ENCODE measurements at regions of chr6 and their contacts with region 1.

Region 1: GRCh38 chr6:155174576-155175211 is 89.1 kb upstream of the CLDN20 start:
- DNase-seq: no peak
- ATAC-seq: peak; percentile 73
- H3K4me3 Mint-ChIP-seq: no peak overlapping the region
- H3K27ac Mint-ChIP-seq: peak overlapping the region; percentile 48
- H3K4me1 Mint-ChIP-seq: peaks cover 47% of the 10 kb centered on the region
- H3K27me3 Mint-ChIP-seq: no peaks in the 10 kb centered on the region
- CTCF ChIP-seq: no peak

Region 2: GRCh38 chr6:154675602-154676088 is 499.0 kb before region 1 on chr6:
- CTCF ChIA-PET with region 1: interaction called, 12 read pairs
- POLR2A ChIA-PET with region 1: no interaction called
- intact Hi-C with region 1: loop called (anchors 1 kb)
- DNase-seq: peak; percentile 63
- ATAC-seq: peak; percentile 100
- H3K4me3 Mint-ChIP-seq: no peak overlapping the region
- H3K27ac Mint-ChIP-seq: no peak overlapping the region
- H3K4me1 Mint-ChIP-seq: no peaks in the 10 kb centered on the region
- H3K27me3 Mint-ChIP-seq: no peaks in the 10 kb centered on the region
- CTCF ChIP-seq: peak; percentile 91

Region 3: GRCh38 chr6:154814063-154814462 is 360.6 kb before region 1 on chr6:
- CTCF ChIA-PET with region 1: no interaction called
- POLR2A ChIA-PET with region 1: no interaction called
- intact Hi-C with region 1: loop called (anchors 5 kb)
- DNase-seq: no peak
- ATAC-seq: peak; percentile 39
- H3K4me3 Mint-ChIP-seq: peak overlapping the region; percentile 13
- H3K27ac Mint-ChIP-seq: peak overlapping the region; percentile 64
- H3K4me1 Mint-ChIP-seq: peaks cover 45% of the 10 kb centered on the region
- H3K27me3 Mint-ChIP-seq: no peaks in the 10 kb centered on the region
- CTCF ChIP-seq: no peak

Region 4: DNA sequence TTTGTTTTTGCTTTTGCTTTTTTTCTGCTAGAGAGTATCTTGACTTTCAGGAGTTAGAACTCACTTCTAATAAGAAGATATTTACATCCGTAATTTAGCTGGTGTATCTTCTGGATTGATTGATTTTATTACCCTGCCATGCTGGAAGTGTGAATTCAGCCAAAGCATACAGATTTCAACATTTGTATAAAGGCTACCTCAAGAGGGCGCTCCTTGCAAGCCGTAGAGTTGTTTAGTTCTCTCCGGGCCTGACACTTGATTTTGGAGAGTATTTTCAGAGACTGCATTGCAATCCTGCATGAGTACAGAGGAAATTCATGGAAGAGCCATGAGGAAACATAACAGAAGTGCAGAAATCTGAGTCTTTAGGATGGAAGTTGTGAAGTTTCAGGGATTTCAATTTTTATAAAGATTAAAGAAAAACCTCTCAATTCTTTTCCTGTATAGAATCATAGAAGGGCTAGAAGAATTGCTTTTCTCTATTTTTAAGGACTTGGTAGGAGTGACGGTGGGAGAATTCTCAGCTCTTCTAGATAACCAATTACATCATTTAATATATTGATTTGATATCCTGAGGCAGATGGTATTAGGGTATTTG is 246.3 kb before region 1 on chr6:
- CTCF ChIA-PET with region 1: interaction called, 14 read pairs
- POLR2A ChIA-PET with region 1: interaction called, 5 read pairs
- intact Hi-C with region 1: no loop called
- DNase-seq: no peak
- ATAC-seq: no peak
- H3K4me3 Mint-ChIP-seq: no peak overlapping the region
- H3K27ac Mint-ChIP-seq: no peak overlapping the region
- H3K4me1 Mint-ChIP-seq: peaks cover 19% of the 10 kb centered on the region
- H3K27me3 Mint-ChIP-seq: no peaks in the 10 kb centered on the region
- CTCF ChIP-seq: no peak

Region 5: DNA sequence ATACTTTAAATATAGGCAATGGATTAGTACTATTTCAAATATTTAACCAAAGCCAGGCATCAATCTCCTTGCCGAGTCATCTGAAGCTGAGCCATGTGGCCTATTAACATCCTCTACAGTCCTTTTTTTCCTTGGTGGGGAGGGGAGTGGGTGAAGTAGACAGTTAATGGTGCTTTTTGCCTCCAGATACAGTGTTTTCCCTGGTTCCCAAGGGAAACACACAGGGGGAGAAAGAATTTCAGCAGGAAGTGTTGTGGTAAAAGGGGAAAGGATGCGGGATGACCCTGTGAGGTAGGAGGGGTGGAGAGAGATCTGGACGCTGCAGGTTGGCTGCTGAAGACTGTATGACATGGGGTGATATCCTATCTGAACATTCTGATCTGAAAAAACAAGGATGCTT is 98.7 kb after region 1 on chr6:
- CTCF ChIA-PET with region 1: no interaction called
- POLR2A ChIA-PET with region 1: no interaction called
- intact Hi-C with region 1: loop called (anchors 1 kb)
- DNase-seq: no peak
- ATAC-seq: no peak
- H3K4me3 Mint-ChIP-seq: no peak overlapping the region
- H3K27ac Mint-ChIP-seq: no peak overlapping the region
- H3K4me1 Mint-ChIP-seq: no peaks in the 10 kb centered on the region
- H3K27me3 Mint-ChIP-seq: no peaks in the 10 kb centered on the region
- CTCF ChIP-seq: no peak

Region 6: DNA sequence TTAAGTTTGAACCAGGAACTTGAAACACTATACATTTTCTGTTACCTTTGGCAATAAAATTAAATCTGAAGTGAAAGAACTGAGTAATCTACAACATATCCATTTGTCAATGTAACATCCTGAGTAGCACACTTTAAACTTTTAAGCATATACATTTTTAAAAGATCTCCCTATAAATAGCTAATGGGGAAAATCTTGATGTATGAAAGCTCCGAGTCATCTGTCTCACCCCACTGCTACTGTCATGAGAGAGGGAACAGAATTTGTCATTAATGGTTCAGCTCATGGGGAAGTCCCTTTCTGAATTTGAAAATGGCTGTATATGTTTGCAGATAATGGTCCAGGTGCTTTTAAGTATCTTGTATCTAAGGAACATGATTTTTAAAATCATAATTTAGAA is 336.2 kb after region 1 on chr6:
- CTCF ChIA-PET with region 1: no interaction called
- POLR2A ChIA-PET with region 1: no interaction called
- intact Hi-C with region 1: no loop called
- DNase-seq: no peak
- ATAC-seq: peak; percentile 87
- H3K4me3 Mint-ChIP-seq: no peak overlapping the region
- H3K27ac Mint-ChIP-seq: peak overlapping the region; percentile 50
- H3K4me1 Mint-ChIP-seq: peaks cover 3% of the 10 kb centered on the region
- H3K27me3 Mint-ChIP-seq: no peaks in the 10 kb centered on the region
- CTCF ChIP-seq: no peak

Region 7: DNA sequence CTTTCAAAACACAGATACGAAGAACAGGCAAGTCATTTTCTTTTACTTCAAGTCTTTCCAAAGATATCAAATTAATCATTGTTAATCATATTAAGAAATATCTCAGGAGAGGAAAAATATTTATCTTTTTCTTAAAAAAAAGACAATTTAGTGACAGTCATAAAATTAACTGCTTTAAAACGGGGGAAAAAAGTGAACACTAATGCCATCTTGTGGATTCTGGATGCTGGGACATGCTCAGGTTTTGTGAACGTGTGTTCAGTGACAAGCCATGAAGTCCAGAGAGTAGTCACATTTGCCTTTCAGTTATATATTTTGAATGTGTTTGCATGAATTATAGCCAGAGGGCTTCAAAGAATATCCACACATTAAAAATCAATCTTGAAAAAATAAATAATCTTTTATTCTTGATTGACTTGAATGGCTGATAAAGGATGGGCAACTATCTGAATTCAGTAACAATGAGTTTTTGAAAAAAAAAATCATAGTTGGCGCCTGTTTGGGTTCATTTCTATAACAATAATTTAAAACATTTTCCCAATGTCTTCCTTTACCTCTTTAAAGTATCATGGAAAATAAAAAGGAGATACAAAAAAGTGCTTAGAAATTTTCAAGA is 355.6 kb after region 1 on chr6:
- CTCF ChIA-PET with region 1: no interaction called
- POLR2A ChIA-PET with region 1: no interaction called
- intact Hi-C with region 1: loop called (anchors 2 kb)
- DNase-seq: no peak
- ATAC-seq: peak; percentile 37
- H3K4me3 Mint-ChIP-seq: no peak overlapping the region
- H3K27ac Mint-ChIP-seq: no peak overlapping the region
- H3K4me1 Mint-ChIP-seq: peaks cover 9% of the 10 kb centered on the region
- H3K27me3 Mint-ChIP-seq: no peaks in the 10 kb centered on the region
- CTCF ChIP-seq: no peak

Region 8: GRCh38 chr6:156699017-156699421 is 1524.3 kb after region 1 on chr6:
- CTCF ChIA-PET with region 1: no interaction called
- POLR2A ChIA-PET with region 1: no interaction called
- intact Hi-C with region 1: loop called (anchors 10 kb)
- DNase-seq: no peak
- ATAC-seq: peak; percentile 45
- H3K4me3 Mint-ChIP-seq: peak overlapping the region; percentile 74
- H3K27ac Mint-ChIP-seq: peak overlapping the region; percentile 92
- H3K4me1 Mint-ChIP-seq: peaks cover 79% of the 10 kb centered on the region
- H3K27me3 Mint-ChIP-seq: no peaks in the 10 kb centered on the region
- CTCF ChIP-seq: no peak